ENCODE measurements at regions of chr17 and their contacts with region 1.

Region 1: GRCh38 chr17:63919311-63919723 is 678 bp upstream of the GH1 start:
- DNase-seq: peak; percentile 65
- ATAC-seq: peak; percentile 49
- H3K4me3 Mint-ChIP-seq: peak overlapping the region; percentile 77
- H3K27ac Mint-ChIP-seq: peak overlapping the region; percentile 75
- H3K4me1 Mint-ChIP-seq: peaks cover 85% of the 10 kb centered on the region
- H3K27me3 Mint-ChIP-seq: no peaks in the 10 kb centered on the region
- CTCF ChIP-seq: no peak

Region 2: GRCh38 chr17:63931099-63931561 is 11.8 kb after region 1 on chr17:
- CTCF ChIA-PET with region 1: interaction called, 80 read pairs
- POLR2A ChIA-PET with region 1: interaction called, 272 read pairs
- intact Hi-C with region 1: loop called (anchors 1 kb)
- DNase-seq: peak; percentile 67
- ATAC-seq: peak; percentile 45
- H3K4me3 Mint-ChIP-seq: peak overlapping the region; percentile 98
- H3K27ac Mint-ChIP-seq: peak overlapping the region; percentile 96
- H3K4me1 Mint-ChIP-seq: peaks cover 89% of the 10 kb centered on the region
- H3K27me3 Mint-ChIP-seq: no peaks in the 10 kb centered on the region
- CTCF ChIP-seq: no peak

Region 3: DNA sequence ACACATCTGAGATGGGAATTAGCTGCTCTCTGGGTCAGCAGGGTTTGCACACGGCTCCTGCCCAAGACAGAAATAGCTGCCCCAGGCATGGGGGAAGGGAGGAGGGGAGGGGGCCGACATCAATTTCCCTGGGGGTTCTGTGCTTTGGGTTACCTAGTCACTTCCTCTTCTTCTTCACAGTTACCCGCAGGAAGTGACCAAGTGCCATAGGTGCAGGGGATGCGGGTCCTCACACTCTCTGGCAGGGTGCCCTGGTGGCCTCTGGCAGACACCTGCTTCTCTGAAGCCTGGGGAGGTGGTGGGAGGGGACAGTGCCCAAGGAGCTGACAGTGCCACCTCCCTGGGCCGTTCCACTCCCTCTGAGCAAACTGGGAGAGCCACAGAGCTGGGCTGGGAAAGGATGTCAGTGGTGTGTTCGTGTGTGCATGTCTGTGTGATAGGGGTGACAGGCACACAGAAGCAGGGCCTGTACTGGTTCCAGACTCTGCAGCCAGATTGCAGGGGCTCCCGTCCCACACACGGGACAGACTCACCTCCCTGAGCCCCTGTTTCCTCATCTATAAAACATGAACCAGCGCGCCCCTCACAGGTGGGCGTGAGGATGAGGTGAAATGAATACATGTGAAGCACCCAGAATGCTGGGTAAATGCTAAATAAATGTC is 35.2 kb after region 1 on chr17:
- CTCF ChIA-PET with region 1: interaction called, 162 read pairs
- POLR2A ChIA-PET with region 1: interaction called, 33 read pairs
- intact Hi-C with region 1: loop called (anchors 1 kb)
- DNase-seq: peak; percentile 50
- ATAC-seq: peak; percentile 86
- H3K4me3 Mint-ChIP-seq: peak overlapping the region; percentile 77
- H3K27ac Mint-ChIP-seq: peak overlapping the region; percentile 94
- H3K4me1 Mint-ChIP-seq: peaks cover 37% of the 10 kb centered on the region
- H3K27me3 Mint-ChIP-seq: no peaks in the 10 kb centered on the region
- CTCF ChIP-seq: no peak

Region 4: DNA sequence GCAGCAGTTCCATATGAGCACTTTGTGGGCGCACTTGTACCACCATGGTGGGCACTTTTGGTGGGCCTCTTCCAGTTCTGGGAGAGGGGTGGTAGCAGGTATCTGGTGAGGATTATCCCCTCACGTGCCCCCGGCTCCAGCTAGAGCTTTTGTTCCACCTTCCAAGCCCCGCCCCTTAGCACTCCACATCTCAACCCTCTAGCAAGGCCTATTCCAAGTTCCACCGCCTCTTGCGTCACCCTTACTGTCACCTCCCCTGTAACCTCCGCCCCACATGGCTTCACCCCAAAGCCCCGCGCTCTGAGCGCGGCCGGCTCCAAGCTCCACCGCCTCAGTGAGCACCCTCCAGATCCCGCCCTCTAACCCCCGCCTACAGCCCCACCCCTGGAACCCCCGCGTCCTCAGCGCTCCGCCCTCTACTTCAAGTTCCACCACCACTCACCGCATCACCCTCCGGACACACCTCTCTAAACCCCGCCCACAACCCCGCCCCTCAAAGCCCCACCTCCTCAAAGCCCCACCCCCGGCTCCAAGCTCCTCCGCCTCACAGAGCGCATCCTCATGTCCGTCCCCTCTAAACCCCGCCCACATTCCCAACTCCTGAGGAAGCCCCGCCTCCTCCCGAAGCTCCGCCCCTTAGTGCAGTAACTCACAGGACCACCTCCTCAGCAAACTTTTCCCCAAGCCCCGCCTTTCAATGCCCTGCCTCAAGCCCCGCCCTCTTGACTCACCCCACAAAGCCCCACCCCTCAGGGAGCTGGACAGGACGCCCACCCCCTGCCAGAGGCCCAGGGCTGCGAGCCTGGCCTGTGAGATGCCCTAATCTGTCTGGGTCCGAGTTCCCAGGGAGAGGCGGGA is 42.3 kb after region 1 on chr17:
- CTCF ChIA-PET with region 1: interaction called, 162 read pairs
- POLR2A ChIA-PET with region 1: interaction called, 12 read pairs
- intact Hi-C with region 1: no loop called
- DNase-seq: no peak
- ATAC-seq: peak; percentile 86
- H3K4me3 Mint-ChIP-seq: peak overlapping the region; percentile 64
- H3K27ac Mint-ChIP-seq: no peak overlapping the region
- H3K4me1 Mint-ChIP-seq: peaks cover 15% of the 10 kb centered on the region
- H3K27me3 Mint-ChIP-seq: no peaks in the 10 kb centered on the region
- CTCF ChIP-seq: no peak

Region 5: GRCh38 chr17:63984651-63985386 is 65.5 kb after region 1 on chr17:
- CTCF ChIA-PET with region 1: interaction called, 46 read pairs
- POLR2A ChIA-PET with region 1: interaction called, 7 read pairs
- intact Hi-C with region 1: loop called (anchors 1 kb)
- DNase-seq: no peak
- ATAC-seq: peak; percentile 89
- H3K4me3 Mint-ChIP-seq: no peak overlapping the region
- H3K27ac Mint-ChIP-seq: no peak overlapping the region
- H3K4me1 Mint-ChIP-seq: peaks cover 16% of the 10 kb centered on the region
- H3K27me3 Mint-ChIP-seq: no peaks in the 10 kb centered on the region
- CTCF ChIP-seq: no peak

Measured in activated B cell treated with CpG ODN at 0.5 μM for 24 hours (primary cell).